ENCODE measurements at regions of chr1 and their contacts with region 1.

Region 1: GRCh38 chr1:172532700-172533509 is at the start of gene SUCO:
- DNase-seq: peak; percentile 99 to 100
- ATAC-seq: peak; percentile 79 to 93 (median 81)
- H3K4me3 ChIP-seq: peak within 1 kb of the TSS; percentile 81
- H3K4me3 Mint-ChIP-seq: peak within 1 kb of the TSS; percentile 99
- H3K27ac ChIP-seq: peak within 1 kb of the TSS; percentile 97
- H3K27ac Mint-ChIP-seq: peak within 1 kb of the TSS; percentile 99 to 100
- H3K4me1 ChIP-seq: peaks cover 6% of the 10 kb centered on the region
- H3K4me1 Mint-ChIP-seq: peaks cover 50 to 52% of the 10 kb centered on the region in 2 donors
- H3K27me3 ChIP-seq: no peaks in the 10 kb centered on the region
- H3K27me3 Mint-ChIP-seq: peaks cover 5% of the 10 kb centered on the region in 2 donors
- CTCF ChIP-seq: no peak
- total RNA-seq, gene SUCO: 86.0 to 97.5 (median 96.0) TPM

Region 2: GRCh38 chr1:171485375-171486047 is 1047.4 kb before region 1 on chr1 and contains the start of gene PRRC2C:
- intact Hi-C with region 1: loop called (anchors 5 kb)
- DNase-seq: peak; percentile 89 to 99
- ATAC-seq: peak; percentile 80 to 94 (median 83)
- H3K4me3 ChIP-seq: peak within 1 kb of the TSS; percentile 91
- H3K4me3 Mint-ChIP-seq: peak within 1 kb of the TSS; percentile 97
- H3K27ac ChIP-seq: peak within 1 kb of the TSS; percentile 91
- H3K27ac Mint-ChIP-seq: peak within 1 kb of the TSS; percentile 99 to 100
- H3K4me1 ChIP-seq: peaks cover 10% of the 10 kb centered on the region
- H3K4me1 Mint-ChIP-seq: peaks cover 54 to 56% of the 10 kb centered on the region in 2 donors
- H3K27me3 ChIP-seq: no peaks in the 10 kb centered on the region
- H3K27me3 Mint-ChIP-seq: no peaks in the 10 kb centered on the region
- CTCF ChIP-seq: peak; percentile 80
- total RNA-seq, gene PRRC2C: 330 to 355 (median 353) TPM

Region 3: GRCh38 chr1:171515299-171515698 is 1017.6 kb before region 1 on chr1:
- intact Hi-C with region 1: no loop called
- DNase-seq: no peak
- ATAC-seq: no peak
- H3K4me3 ChIP-seq: no peak overlapping the region
- H3K4me3 Mint-ChIP-seq: no peak overlapping the region
- H3K27ac ChIP-seq: no peak overlapping the region
- H3K27ac Mint-ChIP-seq: peak overlapping the region; percentile 33 to 67
- H3K4me1 ChIP-seq: no peaks in the 10 kb centered on the region
- H3K4me1 Mint-ChIP-seq: peaks cover 50 to 63% of the 10 kb centered on the region in 2 donors
- H3K27me3 ChIP-seq: no peaks in the 10 kb centered on the region
- H3K27me3 Mint-ChIP-seq: no peaks in the 10 kb centered on the region
- CTCF ChIP-seq: no peak

Region 4: DNA sequence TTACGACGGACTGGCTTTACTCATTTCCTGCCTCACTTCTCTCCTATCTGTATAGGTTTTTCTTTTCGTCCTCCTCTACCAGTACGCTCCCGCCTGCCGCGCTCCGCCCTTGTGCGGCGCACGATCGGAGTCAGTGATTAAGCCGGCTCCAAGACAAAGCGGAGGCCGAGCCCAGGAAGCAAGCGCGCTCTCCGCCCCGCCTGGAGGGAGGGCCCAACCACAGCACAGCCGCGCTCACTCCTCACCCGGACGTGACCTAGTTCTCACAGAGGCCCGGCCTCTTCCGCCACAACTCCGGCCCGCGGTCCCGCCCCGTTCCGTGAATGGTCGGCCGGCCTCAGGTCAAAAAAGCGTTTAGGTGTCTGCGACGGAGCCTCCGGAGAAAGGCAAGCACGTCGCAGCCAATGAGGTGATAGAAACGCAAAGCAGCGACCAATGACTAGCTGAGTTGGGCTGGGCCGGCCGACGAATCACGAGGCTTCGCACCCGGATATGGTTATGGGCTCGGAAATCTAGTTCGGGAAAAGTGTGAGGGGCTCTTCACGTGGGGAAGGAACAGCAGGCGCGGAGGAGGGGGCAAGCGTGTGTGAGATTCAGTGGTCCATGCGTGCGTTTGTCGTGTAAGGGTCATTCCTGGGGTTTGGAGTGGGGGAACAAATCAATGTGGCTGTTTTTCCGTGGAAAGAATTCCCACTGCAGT is 751.6 kb before region 1 on chr1 and contains the start of gene METTL13:
- intact Hi-C with region 1: loop called (anchors 2 kb)
- DNase-seq: peak; percentile 96 to 99
- ATAC-seq: peak; percentile 92 to 98 (median 93)
- H3K4me3 ChIP-seq: peak within 1 kb of the TSS; percentile 90
- H3K4me3 Mint-ChIP-seq: peak within 1 kb of the TSS; percentile 100
- H3K27ac ChIP-seq: peak within 1 kb of the TSS; percentile 80
- H3K27ac Mint-ChIP-seq: peak within 1 kb of the TSS; percentile 98 to 100
- H3K4me1 ChIP-seq: peaks cover 30% of the 10 kb centered on the region
- H3K4me1 Mint-ChIP-seq: peaks cover 49 to 55% of the 10 kb centered on the region in 2 donors
- H3K27me3 ChIP-seq: no peaks in the 10 kb centered on the region
- H3K27me3 Mint-ChIP-seq: peaks cover 1 to 5% of the 10 kb centered on the region in 2 donors
- CTCF ChIP-seq: no peak
- total RNA-seq, gene METTL13: 12.1 to 23.3 (median 18.2) TPM

Region 5: GRCh38 chr1:172566196-172566997 is 33.5 kb after region 1 on chr1:
- intact Hi-C with region 1: no loop called
- DNase-seq: no peak
- ATAC-seq: no peak
- H3K4me3 ChIP-seq: no peak overlapping the region
- H3K4me3 Mint-ChIP-seq: no peak overlapping the region
- H3K27ac ChIP-seq: no peak overlapping the region
- H3K27ac Mint-ChIP-seq: peak overlapping the region; percentile 2 to 37
- H3K4me1 ChIP-seq: no peaks in the 10 kb centered on the region
- H3K4me1 Mint-ChIP-seq: peaks cover 18 to 30% of the 10 kb centered on the region in 2 donors
- H3K27me3 ChIP-seq: no peaks in the 10 kb centered on the region
- H3K27me3 Mint-ChIP-seq: no peaks in the 10 kb centered on the region
- CTCF ChIP-seq: no peak

Region 6: GRCh38 chr1:172662464-172663109 is 129.7 kb after region 1 on chr1:
- intact Hi-C with region 1: loop called (anchors 5 kb)
- DNase-seq: peak; percentile 83 to 93
- ATAC-seq: peak; percentile 71 to 86 (median 82)
- H3K4me3 ChIP-seq: peak overlapping the region; percentile 72
- H3K4me3 Mint-ChIP-seq: peak overlapping the region; percentile 92
- H3K27ac ChIP-seq: peak overlapping the region; percentile 90
- H3K27ac Mint-ChIP-seq: peak overlapping the region; percentile 98
- H3K4me1 ChIP-seq: peaks cover 30% of the 10 kb centered on the region
- H3K4me1 Mint-ChIP-seq: peaks cover 82 to 88% of the 10 kb centered on the region in 2 donors
- H3K27me3 ChIP-seq: no peaks in the 10 kb centered on the region
- H3K27me3 Mint-ChIP-seq: no peaks in the 10 kb centered on the region
- CTCF ChIP-seq: no peak

Region 7: DNA sequence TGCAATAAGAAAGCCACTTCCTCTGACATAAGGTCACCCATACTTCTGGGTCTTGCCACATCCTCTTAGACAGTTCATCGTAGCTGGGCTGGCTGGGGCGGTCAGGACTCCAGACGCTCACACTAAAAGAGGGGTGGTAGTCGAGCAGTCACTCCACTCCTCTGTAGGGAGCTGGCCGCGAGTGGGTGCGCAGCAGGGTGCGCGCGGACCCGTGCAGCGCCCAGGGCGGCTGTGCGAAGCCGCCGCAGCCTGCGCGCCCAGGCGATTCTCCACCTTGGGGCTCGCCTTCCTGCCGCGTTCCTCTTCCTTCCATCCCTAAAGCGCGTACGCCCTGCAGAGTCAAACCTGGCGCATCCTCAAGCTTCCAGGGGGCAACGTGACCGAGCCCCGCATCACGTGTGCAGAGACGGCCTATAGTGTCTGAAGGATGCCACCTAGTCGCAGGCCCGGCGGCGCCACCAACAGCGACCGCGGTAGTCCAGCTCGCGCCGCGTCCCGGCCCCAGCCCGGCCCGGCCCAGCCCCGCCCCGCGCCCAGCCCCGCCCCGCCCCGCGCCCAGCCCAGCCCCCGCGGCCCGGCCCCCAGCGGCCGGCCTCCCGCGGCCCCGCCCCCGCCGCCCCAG is 943.9 kb after region 1 on chr1:
- intact Hi-C with region 1: loop called (anchors 5 kb)
- DNase-seq: peak; percentile 75 to 89
- ATAC-seq: peak; percentile 77 to 92 (median 85)
- H3K4me3 ChIP-seq: peak overlapping the region; percentile 85
- H3K4me3 Mint-ChIP-seq: peak overlapping the region; percentile 89
- H3K27ac ChIP-seq: peak overlapping the region; percentile 94
- H3K27ac Mint-ChIP-seq: peak overlapping the region; percentile 90 to 98
- H3K4me1 ChIP-seq: peaks cover 23% of the 10 kb centered on the region
- H3K4me1 Mint-ChIP-seq: peaks cover 58 to 69% of the 10 kb centered on the region in 2 donors
- H3K27me3 ChIP-seq: no peaks in the 10 kb centered on the region
- H3K27me3 Mint-ChIP-seq: no peaks in the 10 kb centered on the region
- CTCF ChIP-seq: no peak

Region 8: DNA sequence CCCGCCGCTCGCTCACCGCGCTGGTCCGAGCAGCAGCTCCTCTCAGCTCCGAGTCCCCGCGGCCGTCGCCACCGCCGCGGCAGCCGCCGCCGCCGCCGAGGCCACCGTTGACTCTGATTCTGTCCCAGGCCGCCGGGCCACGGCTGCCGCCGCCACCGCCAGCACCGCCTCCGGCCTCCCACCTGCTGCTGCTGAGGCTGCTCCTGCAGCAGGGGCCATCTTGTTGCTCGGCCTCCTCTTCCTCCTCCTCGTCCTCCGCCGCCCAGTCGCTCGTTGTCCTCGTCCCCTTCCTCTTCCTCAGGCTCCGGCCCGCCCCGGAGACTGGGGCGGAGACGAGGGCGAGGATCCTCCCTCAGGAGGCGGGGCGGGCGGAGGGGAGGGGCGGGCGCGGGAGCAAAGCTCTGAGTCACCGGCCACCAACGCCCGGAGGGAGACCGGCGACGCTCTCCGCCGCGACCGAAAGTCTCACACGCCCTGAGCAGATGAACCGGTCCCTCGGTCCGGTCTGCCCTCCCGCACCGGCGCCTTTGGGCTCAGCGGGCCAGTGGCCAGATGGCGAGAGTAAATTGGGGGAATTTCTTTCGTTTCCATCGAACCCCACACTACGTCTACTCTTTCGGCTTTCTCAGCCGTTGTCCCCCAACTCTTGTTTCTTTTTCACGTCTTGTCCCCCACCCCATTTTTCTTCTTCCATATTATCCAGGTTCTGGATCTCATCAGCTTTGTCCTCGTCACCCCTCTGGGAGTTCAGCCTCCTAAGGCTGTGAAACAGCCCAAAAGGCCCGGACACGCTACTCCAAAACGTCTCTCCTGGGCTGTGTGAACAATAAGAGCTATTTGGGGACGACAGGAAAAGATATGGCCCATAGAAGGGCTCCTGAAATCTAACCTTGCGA is 1489.4 kb after region 1 on chr1 and contains the start of gene RC3H1:
- intact Hi-C with region 1: loop called (anchors 2 kb)
- DNase-seq: peak; percentile 87 to 93
- ATAC-seq: peak; percentile 91 to 97 (median 91)
- H3K4me3 ChIP-seq: peak within 1 kb of the TSS; percentile 71
- H3K4me3 Mint-ChIP-seq: peak within 1 kb of the TSS; percentile 99
- H3K27ac ChIP-seq: peak within 1 kb of the TSS; percentile 90
- H3K27ac Mint-ChIP-seq: peak within 1 kb of the TSS; percentile 93 to 98
- H3K4me1 ChIP-seq: peaks cover 14% of the 10 kb centered on the region
- H3K4me1 Mint-ChIP-seq: peaks cover 43 to 55% of the 10 kb centered on the region in 2 donors
- H3K27me3 ChIP-seq: no peaks in the 10 kb centered on the region
- H3K27me3 Mint-ChIP-seq: no peaks in the 10 kb centered on the region
- CTCF ChIP-seq: no peak
- total RNA-seq, gene RC3H1: 67.8 to 82.1 (median 78.9) TPM

Measured in natural killer cell (primary cell).